Naive thymus-derived CD4-positive, alpha-beta T cell (primary cell): ENCODE measurements at regions of chr12 and their contacts with region 1.

Region 1: GRCh38 chr12:69239352-69239921 is at the start of gene CPSF6:
- DNase-seq: peak; percentile 93 to 97 (median 95)
- ATAC-seq: peak; percentile 96
- H3K4me3 ChIP-seq: peak within 1 kb of the TSS; percentile 86
- H3K4me3 Mint-ChIP-seq: peak within 1 kb of the TSS; percentile 94 to 100 (median 98)
- H3K27ac ChIP-seq: peak within 1 kb of the TSS; percentile 90
- H3K27ac Mint-ChIP-seq: peak within 1 kb of the TSS; percentile 96 to 100 (median 99)
- H3K4me1 ChIP-seq: peaks cover 32 to 37% of the 10 kb centered on the region in 2 donors
- H3K4me1 Mint-ChIP-seq: peaks cover 32 to 58% (median 54%) of the 10 kb centered on the region in 7 donors
- H3K27me3 ChIP-seq: no peaks in the 10 kb centered on the region
- H3K27me3 Mint-ChIP-seq: no peaks in the 10 kb centered on the region
- total RNA-seq, gene CPSF6: 86.8 to 127 (median 96.5) TPM

Region 2: DNA sequence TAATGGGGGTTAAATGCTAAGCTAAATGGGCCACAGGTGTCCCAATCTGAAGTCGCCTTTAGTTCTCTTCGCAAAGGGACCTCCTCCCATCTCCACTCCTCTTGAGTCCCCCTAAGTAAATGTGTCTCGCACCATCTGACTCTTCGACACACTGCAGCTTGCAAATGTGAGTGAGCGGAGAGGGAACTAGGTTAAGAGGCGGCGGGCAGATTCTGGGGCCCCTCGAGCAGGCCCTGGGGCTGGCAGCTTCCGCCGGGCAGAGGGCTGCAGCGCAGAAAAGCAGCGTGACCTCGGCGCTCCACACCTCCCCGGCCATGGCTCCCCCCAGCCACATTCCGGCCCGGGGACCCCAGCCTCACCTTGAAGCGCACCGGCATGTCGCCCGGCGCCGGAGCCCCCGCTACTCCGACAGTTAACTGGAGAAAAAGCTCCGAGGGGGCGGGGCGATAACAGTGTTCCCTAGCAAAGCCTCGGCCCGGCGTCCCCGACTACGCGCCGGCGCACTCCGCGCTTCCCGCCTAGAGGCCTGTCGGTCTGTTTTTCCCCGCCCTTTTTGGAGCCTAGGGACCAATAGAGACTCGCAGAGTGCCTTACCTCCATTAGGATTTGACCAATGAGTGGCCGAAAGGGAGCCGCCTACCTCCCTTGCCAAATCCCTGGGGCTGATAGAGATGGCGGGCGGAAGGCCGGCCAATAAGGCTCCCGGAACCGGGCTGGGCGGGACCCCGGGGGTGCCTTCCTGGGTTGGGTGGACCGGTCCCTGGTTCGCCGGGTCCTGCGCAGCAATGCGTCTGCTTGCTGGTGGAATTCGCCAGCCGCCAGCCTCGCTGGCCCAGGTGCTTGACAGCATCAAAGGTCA is 907.3 kb before region 1 on chr12 and contains the start of gene MDM1:
- CTCF ChIA-PET with region 1: no interaction called
- POLR2A ChIA-PET with region 1: no interaction called
- intact Hi-C with region 1: loop called in 1 of 2 experiments (anchors 1 kb)
- DNase-seq: peak; percentile 85 to 96 (median 95)
- ATAC-seq: peak; percentile 98
- H3K4me3 ChIP-seq: peak within 1 kb of the TSS; percentile 68
- H3K4me3 Mint-ChIP-seq: peak within 1 kb of the TSS; percentile 85 to 93 (median 91)
- H3K27ac ChIP-seq: peak within 1 kb of the TSS; percentile 73
- H3K27ac Mint-ChIP-seq: peak within 1 kb of the TSS; percentile 78 to 93 (median 90)
- H3K4me1 ChIP-seq: peaks cover 9 to 26% of the 10 kb centered on the region in 2 donors
- H3K4me1 Mint-ChIP-seq: peaks cover 33 to 61% (median 52%) of the 10 kb centered on the region in 7 donors
- H3K27me3 ChIP-seq: no peaks in the 10 kb centered on the region
- H3K27me3 Mint-ChIP-seq: peaks cover 0 to 15% (median 0%) of the 10 kb centered on the region in 5 donors
- total RNA-seq, gene MDM1: 16.2 to 38.4 (median 23.4) TPM

Region 3: DNA sequence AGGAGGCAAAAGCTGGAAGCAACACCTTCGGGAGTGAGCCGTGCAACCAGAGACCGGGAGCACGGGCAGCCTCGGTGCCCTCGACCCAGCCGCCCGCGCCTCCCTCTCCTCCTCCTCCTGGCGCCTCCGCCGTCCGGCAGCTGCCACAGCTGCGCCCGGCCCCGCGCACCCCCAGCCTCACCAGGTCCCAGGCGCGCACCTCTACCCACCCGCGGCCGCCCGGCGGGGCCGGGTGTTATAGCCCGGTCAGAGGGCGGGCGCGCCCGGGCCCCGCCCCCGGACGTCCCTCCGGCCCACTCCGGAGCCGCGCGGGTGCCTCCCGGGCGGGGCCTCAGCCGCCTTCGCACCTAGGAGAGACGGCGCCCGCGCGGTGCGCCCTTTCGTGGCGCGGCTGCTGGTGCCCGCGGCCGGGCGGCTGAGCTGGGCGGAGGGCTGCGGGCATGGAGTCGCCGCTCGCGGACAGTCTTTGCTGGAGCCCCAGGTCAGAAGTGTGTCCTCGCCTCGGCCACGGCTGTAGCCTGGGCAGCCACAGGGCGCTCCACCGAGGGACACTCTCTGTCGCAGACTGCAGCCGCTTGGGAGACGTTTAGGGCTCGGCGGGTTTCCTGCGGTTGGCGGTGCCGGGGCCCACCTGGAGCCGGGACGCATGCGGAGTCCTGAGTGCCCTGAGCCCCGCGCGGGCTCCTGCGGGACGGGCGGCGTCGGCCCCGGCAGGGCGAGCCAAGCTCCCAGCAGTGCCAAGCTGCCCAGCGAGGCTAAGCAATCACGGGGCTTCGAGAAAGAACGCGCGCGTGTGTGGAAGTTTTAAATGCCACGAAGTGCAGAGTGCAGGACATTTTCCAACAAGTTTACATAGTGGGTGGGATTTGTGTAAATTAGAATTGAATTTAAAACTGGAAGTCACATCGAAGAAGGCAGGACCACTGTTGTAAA is 306.2 kb before region 1 on chr12 and contains the start of gene CPM:
- CTCF ChIA-PET with region 1: no interaction called
- POLR2A ChIA-PET with region 1: no interaction called
- intact Hi-C with region 1: loop called (anchors 1 to 2 kb)
- DNase-seq: peak; percentile 47 to 89 (median 62)
- ATAC-seq: peak; percentile 98
- H3K4me3 ChIP-seq: peak within 1 kb of the TSS; percentile 58
- H3K4me3 Mint-ChIP-seq: peak within 1 kb of the TSS; percentile 83 to 95 (median 89)
- H3K27ac ChIP-seq: peak within 1 kb of the TSS; percentile 0
- H3K27ac Mint-ChIP-seq: peak within 1 kb of the TSS in 3 of 9 donors; percentile 51 to 55 (median 53)
- H3K4me1 ChIP-seq: peaks cover 0 to 6% of the 10 kb centered on the region in 2 donors
- H3K4me1 Mint-ChIP-seq: peaks cover 6 to 20% (median 7%) of the 10 kb centered on the region in 7 donors
- H3K27me3 ChIP-seq: peaks cover 0 to 2% of the 10 kb centered on the region in 2 donors
- H3K27me3 Mint-ChIP-seq: peaks cover 5 to 16% (median 11%) of the 10 kb centered on the region in 5 donors
- total RNA-seq, gene CPM: 1.0 to 5.9 (median 2.7) TPM

Region 4: GRCh38 chr12:69330475-69331473 is 91.3 kb after region 1 on chr12:
- CTCF ChIA-PET with region 1: no interaction called
- POLR2A ChIA-PET with region 1: interaction called, 45 read pairs
- intact Hi-C with region 1: loop called (anchors 1 to 2 kb)
- DNase-seq: peak; percentile 28 to 83 (median 76)
- ATAC-seq: peak; percentile 78
- H3K4me3 ChIP-seq: peak overlapping the region; percentile 83
- H3K4me3 Mint-ChIP-seq: peak overlapping the region; percentile 75 to 97 (median 96)
- H3K27ac ChIP-seq: peak overlapping the region; percentile 92
- H3K27ac Mint-ChIP-seq: peak overlapping the region; percentile 91 to 99 (median 96)
- H3K4me1 ChIP-seq: peaks cover 20 to 51% of the 10 kb centered on the region in 2 donors
- H3K4me1 Mint-ChIP-seq: peaks cover 10 to 76% (median 71%) of the 10 kb centered on the region in 7 donors
- H3K27me3 ChIP-seq: no peaks in the 10 kb centered on the region
- H3K27me3 Mint-ChIP-seq: peaks cover 0 to 20% (median 0%) of the 10 kb centered on the region in 5 donors

Region 5: DNA sequence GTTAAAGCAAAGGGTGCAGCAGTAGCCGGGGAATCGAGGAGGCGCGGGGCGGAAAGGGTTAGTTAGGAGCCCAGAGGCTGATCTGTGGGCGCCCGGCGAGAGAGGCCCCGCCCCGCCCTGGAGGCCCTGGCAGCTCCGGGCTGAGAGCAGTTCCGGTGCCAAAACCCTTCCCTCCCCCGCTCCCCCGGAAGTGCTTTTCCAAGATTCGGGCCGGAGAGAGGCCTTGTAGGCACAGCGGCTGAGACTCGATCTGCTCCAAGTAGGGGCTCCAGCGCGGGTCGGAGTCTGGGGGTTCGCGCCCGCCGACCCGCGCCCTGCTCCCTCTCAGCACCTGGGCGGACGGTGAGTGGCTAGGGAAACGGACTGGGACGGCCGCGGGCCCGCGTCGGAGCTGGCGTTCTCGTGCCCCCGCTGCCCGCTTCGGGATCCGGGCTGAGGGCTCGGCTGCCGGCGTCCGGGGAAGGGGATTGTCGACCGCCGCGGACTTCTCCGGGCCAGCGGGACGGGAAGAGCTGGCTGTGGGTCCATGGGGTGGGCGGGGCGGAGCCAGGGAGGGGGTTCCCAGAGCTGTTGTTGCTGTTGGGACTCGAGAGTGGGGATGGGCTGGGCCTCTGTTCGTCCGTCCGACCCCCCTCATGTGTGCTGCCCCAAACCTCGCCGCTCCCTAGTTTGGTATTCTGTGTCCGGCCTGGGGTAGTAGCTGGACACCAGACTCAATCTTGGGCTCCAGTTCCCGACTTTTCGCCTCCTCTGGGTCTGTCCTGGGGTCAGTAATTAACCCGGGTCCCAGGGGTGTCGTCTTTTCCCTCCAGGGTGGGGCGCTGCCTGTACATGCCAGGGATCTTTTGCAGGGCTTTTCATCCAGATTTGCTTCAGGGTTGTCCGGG is 231.0 kb after region 1 on chr12 and contains the start of gene FRS2:
- CTCF ChIA-PET with region 1: no interaction called
- POLR2A ChIA-PET with region 1: no interaction called
- intact Hi-C with region 1: loop called (anchors 1 kb)
- DNase-seq: peak; percentile 66 to 87 (median 81)
- ATAC-seq: peak; percentile 99
- H3K4me3 ChIP-seq: peak within 1 kb of the TSS; percentile 80
- H3K4me3 Mint-ChIP-seq: peak within 1 kb of the TSS; percentile 91 to 100 (median 96)
- H3K27ac ChIP-seq: peak within 1 kb of the TSS; percentile 94
- H3K27ac Mint-ChIP-seq: peak within 1 kb of the TSS; percentile 91 to 99 (median 97)
- H3K4me1 ChIP-seq: peaks cover 11 to 12% of the 10 kb centered on the region in 2 donors
- H3K4me1 Mint-ChIP-seq: peaks cover 41 to 60% (median 51%) of the 10 kb centered on the region in 7 donors
- H3K27me3 ChIP-seq: no peaks in the 10 kb centered on the region
- H3K27me3 Mint-ChIP-seq: no peaks in the 10 kb centered on the region
- total RNA-seq, gene FRS2: 17.5 to 30.1 (median 24.0) TPM

Region 6: DNA sequence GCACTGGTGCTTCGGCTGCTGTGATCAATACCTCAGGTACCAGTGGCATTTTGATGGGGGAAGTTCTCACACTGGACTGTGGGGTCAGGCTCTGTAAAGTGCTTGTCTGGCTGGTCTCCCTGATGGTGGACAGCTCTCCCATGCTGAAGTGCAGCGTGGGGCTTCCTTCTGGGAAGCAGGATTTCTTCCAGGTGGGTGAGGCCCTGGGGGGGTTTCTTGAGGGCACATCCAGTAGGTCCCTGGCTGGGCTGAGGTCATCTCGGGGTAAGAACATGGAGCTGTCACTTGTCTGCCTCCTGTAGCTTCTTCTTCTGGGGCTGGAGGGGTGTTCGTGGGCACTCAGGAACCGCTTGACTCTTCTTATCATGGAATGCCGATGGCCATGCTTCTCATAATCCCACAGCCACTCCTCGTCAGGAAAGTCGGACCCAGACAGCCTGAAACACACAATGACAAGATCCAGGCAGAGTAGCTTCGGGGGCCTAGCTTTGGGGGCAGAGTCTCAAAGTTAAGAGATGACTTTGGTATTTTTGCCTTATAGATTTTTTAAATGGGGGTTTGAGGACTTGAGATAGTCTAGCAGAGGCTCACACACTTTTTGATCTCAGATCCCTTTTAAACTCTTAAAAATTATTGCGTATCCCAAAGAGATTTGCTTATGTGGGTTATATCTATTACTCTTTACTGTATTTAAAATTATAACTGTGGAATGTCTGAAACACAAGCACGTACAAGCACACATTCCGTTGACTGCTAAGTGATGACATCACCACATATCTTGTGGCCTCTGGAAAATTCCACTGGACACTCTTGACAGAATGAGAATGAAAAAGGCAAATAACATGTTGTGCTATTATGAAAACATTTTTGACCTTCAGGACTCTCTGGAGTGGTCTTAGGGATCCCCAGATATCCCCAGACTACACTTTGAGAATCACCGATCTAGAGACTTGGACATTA is 416.2 kb after region 1 on chr12:
- CTCF ChIA-PET with region 1: no interaction called
- POLR2A ChIA-PET with region 1: no interaction called
- intact Hi-C with region 1: no loop called
- DNase-seq: no peak
- ATAC-seq: no peak
- H3K4me3 ChIP-seq: no peak overlapping the region
- H3K4me3 Mint-ChIP-seq: no peak overlapping the region
- H3K27ac ChIP-seq: no peak overlapping the region
- H3K27ac Mint-ChIP-seq: no peak overlapping the region
- H3K4me1 ChIP-seq: no peaks in the 10 kb centered on the region
- H3K4me1 Mint-ChIP-seq: no peaks in the 10 kb centered on the region
- H3K27me3 ChIP-seq: no peaks in the 10 kb centered on the region
- H3K27me3 Mint-ChIP-seq: peaks cover 5 to 18% (median 14%) of the 10 kb centered on the region in 5 donors

Region 7: GRCh38 chr12:70365648-70366518 is 1126.4 kb after region 1 on chr12 and contains the start of gene KCNMB4:
- CTCF ChIA-PET with region 1: no interaction called
- POLR2A ChIA-PET with region 1: no interaction called
- intact Hi-C with region 1: loop called in 1 of 2 experiments (anchors 10 kb)
- DNase-seq: peak; percentile 48 to 85 (median 68)
- ATAC-seq: peak; percentile 86
- H3K4me3 ChIP-seq: peak within 1 kb of the TSS; percentile 70
- H3K4me3 Mint-ChIP-seq: peak within 1 kb of the TSS; percentile 94 to 99 (median 97)
- H3K27ac ChIP-seq: peak within 1 kb of the TSS; percentile 71
- H3K27ac Mint-ChIP-seq: peak within 1 kb of the TSS; percentile 58 to 91 (median 89)
- H3K4me1 ChIP-seq: peaks cover 16 to 19% of the 10 kb centered on the region in 2 donors
- H3K4me1 Mint-ChIP-seq: peaks cover 12 to 41% (median 34%) of the 10 kb centered on the region in 7 donors
- H3K27me3 ChIP-seq: peaks cover 0 to 4% of the 10 kb centered on the region in 2 donors
- H3K27me3 Mint-ChIP-seq: peaks cover 0 to 54% (median 0%) of the 10 kb centered on the region in 5 donors
- total RNA-seq, gene KCNMB4: 0.31 to 1.9 (median 1.4) TPM